ENCODE measurements at regions of chr12 and their contacts with region 1.

Region 1: GRCh38 chr12:74890237-74890599 is 319.4 kb downstream of the KCNC2 start:
- DNase-seq: peak; percentile 53
- H3K4me3 ChIP-seq: no peak overlapping the region
- H3K27ac ChIP-seq: peak overlapping the region; percentile 68
- H3K27me3 ChIP-seq: no peaks in the 10 kb centered on the region
- CTCF ChIP-seq: no peak

Region 2: GRCh38 chr12:74871800-74872438 is 18.3 kb before region 1 on chr12:
- CTCF ChIA-PET with region 1: no interaction called
- POLR2A ChIA-PET with region 1: no interaction called
- DNase-seq: no peak
- H3K4me3 ChIP-seq: no peak overlapping the region
- H3K27ac ChIP-seq: no peak overlapping the region
- H3K27me3 ChIP-seq: no peaks in the 10 kb centered on the region
- CTCF ChIP-seq: no peak

Region 3: GRCh38 chr12:74903522-74903921 is 13.3 kb after region 1 on chr12:
- CTCF ChIA-PET with region 1: interaction called, 12 read pairs
- POLR2A ChIA-PET with region 1: no interaction called
- DNase-seq: no peak
- H3K4me3 ChIP-seq: no peak overlapping the region
- H3K27ac ChIP-seq: no peak overlapping the region
- H3K27me3 ChIP-seq: no peaks in the 10 kb centered on the region
- CTCF ChIP-seq: peak; percentile 25; the same call in 1 of the 2 replicates